MCF 10A (cell line): ENCODE measurements at regions of chr14 and their contacts with region 1.

Region 1: DNA sequence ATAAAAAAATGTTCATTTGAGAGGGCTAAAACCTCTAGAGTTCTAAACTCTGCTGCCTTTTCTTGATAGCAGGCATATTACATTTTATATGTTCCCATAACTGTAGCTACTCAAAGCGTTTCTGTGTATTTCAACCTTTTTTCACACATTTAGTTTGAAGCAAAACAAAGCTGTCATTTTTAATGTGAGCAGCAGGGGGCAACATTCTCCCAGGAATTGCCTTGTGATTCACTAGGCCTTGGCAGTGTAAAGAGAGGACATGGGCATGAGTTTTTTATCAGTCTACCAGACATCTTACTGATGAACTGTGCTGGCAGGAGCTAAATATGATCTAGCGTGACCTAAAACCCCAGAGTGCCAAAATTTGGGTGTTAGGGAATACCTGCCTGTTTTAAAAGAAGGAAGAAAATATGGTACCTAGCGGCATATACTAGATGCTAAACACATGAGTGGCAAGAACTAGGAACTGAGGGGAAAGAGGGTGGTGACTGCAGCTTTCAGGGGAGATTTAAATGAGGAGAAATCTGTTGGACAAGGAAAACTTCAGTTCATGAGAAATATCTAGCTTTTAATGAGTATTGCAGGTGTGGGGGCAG is 65.3 kb downstream of the IFT43 start:
- DNase-seq: peak; percentile 65
- H3K4me3 Mint-ChIP-seq: no peak overlapping the region
- H3K27ac Mint-ChIP-seq: no peak overlapping the region
- H3K4me1 Mint-ChIP-seq: no peaks in the 10 kb centered on the region
- H3K27me3 Mint-ChIP-seq: no peaks in the 10 kb centered on the region
- CTCF ChIP-seq: peak; percentile 84

Region 2: DNA sequence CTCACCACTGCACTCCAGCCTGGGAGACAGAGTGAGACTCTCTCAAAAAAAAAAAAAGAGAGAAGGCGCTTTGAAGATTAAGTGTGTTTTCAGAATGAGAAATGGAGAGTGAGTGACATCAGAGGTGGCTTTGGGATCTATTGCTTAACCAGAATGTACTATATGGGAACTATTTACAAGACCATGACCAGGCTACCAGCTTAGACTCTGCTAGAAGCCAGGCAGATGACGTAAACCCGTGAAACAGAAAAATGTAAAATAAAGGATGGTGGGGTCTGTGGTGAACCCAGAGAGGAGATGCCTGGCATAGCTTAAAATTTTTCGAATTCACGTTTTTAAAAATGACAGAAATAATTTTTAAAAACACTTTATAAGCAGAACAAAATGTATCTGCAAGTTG is 16.6 kb after region 1 on chr14:
- CTCF ChIA-PET with region 1: interaction called, 17 read pairs
- POLR2A ChIA-PET with region 1: no interaction called
- intact Hi-C with region 1: no loop called
- DNase-seq: no peak
- H3K4me3 Mint-ChIP-seq: no peak overlapping the region
- H3K27ac Mint-ChIP-seq: no peak overlapping the region
- H3K4me1 Mint-ChIP-seq: no peaks in the 10 kb centered on the region
- H3K27me3 Mint-ChIP-seq: no peaks in the 10 kb centered on the region
- CTCF ChIP-seq: no peak

Region 3: DNA sequence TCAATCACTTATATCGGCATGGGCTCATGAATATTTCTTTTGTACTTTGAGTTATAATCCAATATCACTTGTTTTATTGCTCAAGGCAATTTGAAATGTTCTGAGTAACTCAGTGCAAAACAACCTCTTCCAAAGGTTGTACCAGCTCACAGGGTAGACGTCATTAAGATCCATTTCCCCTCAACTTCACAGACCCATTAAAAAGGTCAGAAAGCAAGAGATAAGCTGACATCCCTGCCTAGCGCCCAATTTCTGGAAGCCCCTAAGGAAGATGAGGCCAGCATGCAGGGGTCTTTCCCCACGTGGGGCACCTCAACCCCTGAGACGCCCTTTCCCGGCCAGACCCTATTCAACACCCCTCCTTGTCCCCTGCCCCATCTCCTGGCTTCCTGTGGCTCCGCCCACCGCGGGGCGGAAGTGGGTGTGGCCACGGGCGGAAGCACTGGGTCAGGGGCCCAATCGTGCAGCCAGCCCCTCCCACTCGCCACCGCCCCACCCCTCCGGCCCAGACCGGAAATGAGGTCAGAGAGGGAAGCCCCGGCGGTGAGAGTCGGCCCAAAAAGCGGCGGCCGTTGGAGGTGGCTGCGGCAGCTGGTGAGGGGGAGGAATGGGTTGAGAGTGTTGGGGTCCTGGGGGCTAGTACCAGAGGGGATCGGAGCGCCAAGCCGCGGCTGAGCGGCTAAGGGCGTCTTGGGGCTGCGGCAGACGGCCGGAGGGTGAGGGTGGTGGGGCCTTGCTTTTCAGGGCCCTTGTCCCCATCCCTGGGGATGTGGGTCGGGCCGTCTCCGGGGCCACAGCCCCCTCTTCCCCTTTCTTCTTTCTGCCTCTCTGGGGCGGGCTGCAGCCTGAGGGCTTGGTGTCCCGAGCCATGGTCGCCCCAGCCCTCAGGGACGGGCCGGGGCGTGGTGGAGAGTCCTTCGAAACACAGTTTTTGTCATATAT is 100.8 kb after region 1 on chr14 and contains the start of gene GPATCH2L:
- CTCF ChIA-PET with region 1: interaction called, 3 read pairs
- POLR2A ChIA-PET with region 1: interaction called, 3 read pairs
- intact Hi-C with region 1: loop called (anchors 2 kb)
- DNase-seq: peak; percentile 93
- H3K4me3 Mint-ChIP-seq: peak within 1 kb of the TSS; percentile 95
- H3K27ac Mint-ChIP-seq: peak within 1 kb of the TSS; percentile 98
- H3K4me1 Mint-ChIP-seq: peaks cover 37% of the 10 kb centered on the region
- H3K27me3 Mint-ChIP-seq: no peaks in the 10 kb centered on the region
- CTCF ChIP-seq: no peak
- total RNA-seq, gene GPATCH2L: 57.4 and 64.9 TPM in 2 replicates

Region 4: DNA sequence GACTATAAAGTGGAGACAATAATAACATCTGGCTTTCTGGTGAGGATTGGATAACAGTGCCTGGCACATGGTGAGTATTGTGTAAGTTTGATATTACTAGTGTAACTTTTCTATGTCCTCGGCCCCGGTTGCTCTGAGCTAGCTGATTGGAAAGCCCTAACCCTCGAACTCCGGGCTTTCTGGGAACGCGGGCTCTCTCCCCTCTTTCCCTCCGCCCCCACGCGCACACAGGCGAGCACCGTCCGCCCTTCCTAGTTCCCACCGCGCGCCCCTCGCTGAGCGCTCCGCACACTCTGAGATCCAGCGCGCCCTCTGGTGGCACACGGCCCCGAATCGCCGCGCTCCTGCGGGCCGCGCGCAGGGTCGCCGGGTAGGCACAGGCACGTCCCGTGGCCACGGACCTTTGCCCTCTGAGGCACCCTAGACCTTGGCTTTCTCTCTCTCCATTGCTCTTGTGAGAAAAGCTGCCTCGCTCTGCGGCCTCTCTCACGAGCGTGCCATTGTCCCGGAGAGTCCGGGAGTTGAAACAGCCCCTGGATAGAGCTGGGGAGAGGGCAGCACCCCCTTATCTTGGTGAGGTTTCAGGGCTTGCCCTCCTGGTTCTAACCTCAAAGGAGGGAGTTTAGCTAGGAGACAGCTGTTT is 301.9 kb after region 1 on chr14:
- CTCF ChIA-PET with region 1: interaction called, 7 read pairs
- POLR2A ChIA-PET with region 1: no interaction called
- intact Hi-C with region 1: loop called (anchors 1 kb)
- DNase-seq: no peak
- H3K4me3 Mint-ChIP-seq: peak overlapping the region; percentile 58
- H3K27ac Mint-ChIP-seq: no peak overlapping the region
- H3K4me1 Mint-ChIP-seq: no peaks in the 10 kb centered on the region
- H3K27me3 Mint-ChIP-seq: peaks cover 30% of the 10 kb centered on the region
- CTCF ChIP-seq: peak; percentile 64